ENCODE measurements at regions of chr2 and their contacts with region 1.

Region 1: GRCh38 chr2:64203858-64204632 is 59.8 kb upstream of the PELI1 start:
- DNase-seq: no peak
- H3K4me3 ChIP-seq: peak overlapping the region; percentile 22 to 39 (median 34)
- H3K27ac ChIP-seq: peak overlapping the region; percentile 79 to 86 (median 82)
- H3K4me1 ChIP-seq: peaks cover 27 to 47% (median 45%) of the 10 kb centered on the region in 4 donors
- H3K27me3 ChIP-seq: no peaks in the 10 kb centered on the region
- CTCF ChIP-seq: no peak
- EP300 ChIP-seq: no peak
- POLR2A ChIP-seq: no peak

Region 2: GRCh38 chr2:64144057-64145013 is 59.7 kb before region 1 on chr2 and contains the start of gene PELI1:
- intact Hi-C with region 1: loop called (anchors 10 kb)
- DNase-seq: peak; percentile 99
- H3K4me3 ChIP-seq: peak within 1 kb of the TSS; percentile 68 to 100 (median 96)
- H3K27ac ChIP-seq: peak within 1 kb of the TSS; percentile 92 to 99 (median 98)
- H3K4me1 ChIP-seq: peaks cover 18 to 36% (median 34%) of the 10 kb centered on the region in 4 donors
- H3K27me3 ChIP-seq: no peaks in the 10 kb centered on the region
- CTCF ChIP-seq: peak in 2 of 3 experiments; percentile 6 to 30
- EP300 ChIP-seq: no peak
- POLR2A ChIP-seq: peak; percentile 94
- total RNA-seq, gene PELI1: 13.7 to 31.1 (median 19.7) TPM

Region 3: DNA sequence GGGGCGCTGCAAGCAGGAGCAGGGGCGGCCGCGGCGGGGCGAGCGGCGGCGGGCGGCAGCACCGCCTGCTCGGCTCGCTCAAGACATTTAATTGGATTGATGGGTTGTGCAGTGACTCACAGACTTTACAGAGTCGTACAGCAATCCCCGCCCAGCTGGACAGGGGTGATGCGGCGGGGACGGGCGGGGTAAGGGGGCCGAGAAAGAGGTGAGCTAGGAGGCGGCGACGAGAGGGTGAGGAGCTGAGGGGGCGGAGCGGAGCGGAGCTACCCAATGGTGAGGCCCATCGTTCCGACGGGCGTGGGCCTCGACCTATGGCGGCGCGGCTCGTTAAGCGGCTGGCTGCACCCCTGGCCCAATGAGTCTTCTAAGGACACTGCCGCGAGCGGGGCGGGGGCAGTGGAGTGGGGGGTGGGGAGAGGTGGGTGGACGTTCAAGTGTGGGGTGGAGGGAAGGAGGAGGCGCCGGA is 546.8 kb after region 1 on chr2:
- intact Hi-C with region 1: no loop called
- DNase-seq: peak; percentile 100
- H3K4me3 ChIP-seq: peak overlapping the region; percentile 77 to 88 (median 80)
- H3K27ac ChIP-seq: peak overlapping the region; percentile 96 to 99 (median 98)
- H3K4me1 ChIP-seq: peaks cover 12 to 35% (median 27%) of the 10 kb centered on the region in 4 donors
- H3K27me3 ChIP-seq: no peaks in the 10 kb centered on the region
- CTCF ChIP-seq: peak in 1 of 3 experiments; percentile 16
- EP300 ChIP-seq: no peak
- POLR2A ChIP-seq: peak; percentile 96

Measured in esophagus muscularis mucosa (tissue), 4 donors.